ENCODE measurements at regions of chr5 and their contacts with region 1.

Region 1: GRCh38 chr5:74640450-74640953 is at the start of gene ENC1:
- DNase-seq: peak; percentile 89 to 96 (median 90)
- ATAC-seq: peak; percentile 76 to 94 (median 86)
- H3K4me3 ChIP-seq: peak within 1 kb of the TSS; percentile 69 to 91 (median 80)
- H3K27ac ChIP-seq: peak within 1 kb of the TSS; percentile 81 to 96 (median 92)
- H3K4me1 ChIP-seq: peaks cover 0 to 62% (median 31%) of the 10 kb centered on the region in 12 donors
- H3K27me3 ChIP-seq: no peaks in the 10 kb centered on the region
- CTCF ChIP-seq: peak; percentile 39 to 66 (median 54)
- POLR2A ChIP-seq: peak in 1 of 2 donors; percentile 71
- total RNA-seq, gene ENC1: 3.1 to 11.0 (median 5.5) TPM

Region 2: DNA sequence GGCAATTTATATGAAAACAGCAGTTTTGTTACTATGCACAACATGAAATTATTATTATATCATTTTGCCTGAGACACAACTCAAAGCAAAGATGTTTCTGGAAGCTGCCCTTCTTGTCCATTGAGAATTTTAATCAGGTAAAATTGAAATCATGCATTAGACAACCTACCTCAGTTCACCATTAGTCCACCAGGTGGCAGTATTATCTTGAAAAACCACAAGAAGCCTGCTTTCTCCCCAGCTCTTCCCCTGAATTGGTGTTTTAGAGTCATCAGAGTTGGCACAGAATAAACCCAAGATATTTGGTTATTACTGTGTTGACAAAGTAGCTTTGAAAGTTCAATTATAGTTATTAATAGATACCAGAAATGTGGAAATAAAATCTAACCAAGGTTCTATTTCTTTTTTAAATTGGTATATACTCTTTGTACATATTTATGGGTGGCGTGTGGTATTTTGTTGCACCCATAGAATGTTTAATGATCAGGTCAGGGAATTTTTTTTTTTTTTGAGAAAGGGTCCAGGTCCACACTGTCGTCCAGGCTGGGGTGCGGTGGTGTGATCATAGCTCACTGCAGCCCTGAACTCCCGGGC is 1049.3 kb before region 1 on chr5:
- intact Hi-C with region 1: loop called in 5 of 10 experiments (anchors 5 to 10 kb)
- DNase-seq: peak in 2 of 5 donors; percentile 41 to 54
- ATAC-seq: peak in 3 of 4 donors; percentile 59 to 75 (median 66)
- H3K4me3 ChIP-seq: no peak overlapping the region
- H3K27ac ChIP-seq: no peak overlapping the region
- H3K4me1 ChIP-seq: no peaks in the 10 kb centered on the region
- H3K27me3 ChIP-seq: no peaks in the 10 kb centered on the region
- CTCF ChIP-seq: peak; percentile 80 to 93 (median 87)
- POLR2A ChIP-seq: no peak

Region 3: GRCh38 chr5:74035521-74035981 is 605.0 kb before region 1 on chr5:
- intact Hi-C with region 1: loop called in 9 of 10 experiments (anchors 2 to 5 kb)
- DNase-seq: peak in 3 of 5 donors; percentile 32 to 50 (median 38)
- ATAC-seq: peak; percentile 46 to 84 (median 69)
- H3K4me3 ChIP-seq: no peak overlapping the region
- H3K27ac ChIP-seq: no peak overlapping the region
- H3K4me1 ChIP-seq: peaks cover 0 to 14% (median 1%) of the 10 kb centered on the region in 12 donors
- H3K27me3 ChIP-seq: no peaks in the 10 kb centered on the region
- CTCF ChIP-seq: peak; percentile 16 to 69 (median 52)
- POLR2A ChIP-seq: no peak

Region 4: DNA sequence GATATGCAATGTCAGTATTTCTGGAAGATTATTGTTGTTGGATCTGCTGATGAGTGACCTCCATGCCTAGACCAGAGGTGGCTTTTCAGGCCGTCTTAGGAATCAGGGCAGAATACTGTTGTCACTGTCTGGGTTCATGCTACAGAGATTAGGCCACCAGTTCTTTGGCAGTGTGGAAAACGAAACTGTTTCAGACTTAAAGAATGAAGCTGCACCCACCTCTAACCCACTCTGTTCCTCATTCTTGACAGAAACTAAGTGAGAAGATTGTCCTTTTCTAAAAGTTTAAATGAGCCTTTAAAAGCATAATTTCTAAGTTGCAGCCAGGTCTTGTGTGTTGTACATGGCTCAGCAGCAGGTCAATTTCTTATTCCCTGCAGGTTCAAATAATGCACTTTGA is 444.3 kb before region 1 on chr5:
- intact Hi-C with region 1: loop called in 5 of 10 experiments (anchors 5 to 10 kb)
- DNase-seq: no peak
- ATAC-seq: no peak
- H3K4me3 ChIP-seq: no peak overlapping the region
- H3K27ac ChIP-seq: no peak overlapping the region
- H3K4me1 ChIP-seq: peaks cover 0 to 28% (median 7%) of the 10 kb centered on the region in 12 donors
- H3K27me3 ChIP-seq: no peaks in the 10 kb centered on the region
- CTCF ChIP-seq: no peak
- POLR2A ChIP-seq: no peak

Region 5: DNA sequence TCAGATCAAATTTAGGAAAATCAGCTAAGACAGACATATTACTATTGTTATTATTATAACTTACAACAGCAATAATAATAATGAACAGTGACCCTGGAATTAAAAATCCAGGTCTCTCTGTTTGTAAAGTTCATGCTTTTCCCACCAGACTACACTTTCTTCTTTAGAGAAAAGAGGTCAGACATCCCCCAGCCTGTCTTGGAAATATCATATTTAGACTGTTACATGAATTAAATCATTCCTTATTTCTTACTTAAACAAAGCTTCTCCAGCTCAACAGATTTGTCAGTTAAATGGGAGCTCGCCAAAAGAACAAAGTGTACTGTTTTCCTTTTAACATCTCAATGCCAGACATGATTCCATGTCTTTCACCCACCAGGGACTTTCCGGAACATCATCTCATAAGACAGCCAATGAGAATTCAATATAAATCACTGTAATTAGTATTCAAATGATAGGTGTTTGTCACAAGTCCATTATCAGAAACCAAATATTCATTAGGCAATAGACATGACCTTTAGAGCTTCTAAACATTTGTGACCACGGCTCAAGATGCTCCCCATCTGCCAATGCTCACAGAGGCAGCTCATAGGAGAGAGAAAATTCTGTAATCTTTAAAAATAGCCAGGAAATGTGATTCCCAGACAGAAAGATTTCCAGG is 351.9 kb before region 1 on chr5:
- intact Hi-C with region 1: loop called in 4 of 10 experiments (anchors 5 to 10 kb)
- DNase-seq: peak in 1 of 5 donors; percentile 42
- ATAC-seq: peak; percentile 25 to 88 (median 64)
- H3K4me3 ChIP-seq: no peak overlapping the region
- H3K27ac ChIP-seq: peak overlapping the region; percentile 38 to 82 (median 58)
- H3K4me1 ChIP-seq: peaks cover 0 to 29% (median 4%) of the 10 kb centered on the region in 12 donors
- H3K27me3 ChIP-seq: no peaks in the 10 kb centered on the region
- CTCF ChIP-seq: no peak
- POLR2A ChIP-seq: no peak

Region 6: GRCh38 chr5:74357827-74358226 is 282.7 kb before region 1 on chr5:
- intact Hi-C with region 1: no loop called
- DNase-seq: no peak
- ATAC-seq: no peak
- H3K4me3 ChIP-seq: no peak overlapping the region
- H3K27ac ChIP-seq: no peak overlapping the region
- H3K4me1 ChIP-seq: peaks cover 0 to 18% (median 0%) of the 10 kb centered on the region in 12 donors
- H3K27me3 ChIP-seq: no peaks in the 10 kb centered on the region
- CTCF ChIP-seq: no peak
- POLR2A ChIP-seq: no peak

Region 7: DNA sequence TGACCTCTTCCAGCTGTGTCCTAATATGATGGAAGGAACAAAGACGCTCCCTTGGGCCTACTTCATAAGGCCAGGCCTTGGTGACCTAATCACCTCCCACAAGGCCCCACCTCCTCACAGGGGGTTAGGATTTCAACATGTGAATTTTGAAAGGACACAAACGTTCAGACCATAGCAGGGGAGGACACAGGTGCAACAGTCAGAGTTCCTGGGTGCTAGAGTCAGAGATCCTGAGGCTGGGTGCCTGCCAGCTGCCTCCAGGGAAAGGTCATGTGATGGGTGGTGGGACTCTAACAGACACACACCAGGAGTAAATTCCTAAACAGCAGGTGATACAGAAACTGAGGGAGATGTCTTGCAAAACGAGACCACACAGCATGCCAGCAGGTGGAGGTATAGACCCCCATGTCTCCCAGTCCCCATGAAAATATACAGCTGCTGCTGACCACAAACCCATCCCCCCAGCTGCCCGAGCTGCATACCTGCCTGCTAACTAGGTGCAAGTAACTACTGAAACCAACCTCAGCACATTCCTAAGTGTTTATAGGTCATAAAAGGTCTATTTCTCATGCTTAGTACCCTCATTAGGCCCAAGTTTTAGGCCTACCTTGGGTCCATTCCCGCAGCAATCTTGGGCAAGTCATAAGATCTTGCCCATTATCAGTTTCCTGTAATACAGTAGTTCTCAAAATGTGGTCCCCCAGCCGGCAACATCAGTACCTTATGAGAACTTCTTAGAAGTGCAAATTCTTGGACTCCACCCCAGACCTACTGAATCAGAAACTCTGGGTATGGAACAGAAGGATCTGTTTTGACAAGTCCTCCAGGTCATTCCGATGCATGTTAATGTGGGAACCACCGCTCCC is 245.4 kb before region 1 on chr5:
- intact Hi-C with region 1: loop called in 2 of 10 experiments (anchors 5 to 10 kb)
- DNase-seq: no peak
- ATAC-seq: peak in 3 of 4 donors; percentile 52 to 84 (median 82)
- H3K4me3 ChIP-seq: no peak overlapping the region
- H3K27ac ChIP-seq: no peak overlapping the region
- H3K4me1 ChIP-seq: peaks cover 0 to 10% (median 4%) of the 10 kb centered on the region in 12 donors
- H3K27me3 ChIP-seq: no peaks in the 10 kb centered on the region
- CTCF ChIP-seq: no peak
- POLR2A ChIP-seq: no peak

Region 8: GRCh38 chr5:74543156-74543995 is 97.1 kb before region 1 on chr5:
- intact Hi-C with region 1: loop called in 4 of 10 experiments (anchors 2 to 10 kb)
- DNase-seq: no peak
- ATAC-seq: no peak
- H3K4me3 ChIP-seq: peak overlapping the region in 1 of 12 donors; percentile 15
- H3K27ac ChIP-seq: no peak overlapping the region
- H3K4me1 ChIP-seq: peaks cover 0 to 26% (median 6%) of the 10 kb centered on the region in 12 donors
- H3K27me3 ChIP-seq: peaks cover 0 to 6% (median 0%) of the 10 kb centered on the region in 9 donors
- CTCF ChIP-seq: no peak
- POLR2A ChIP-seq: no peak

Region 9: GRCh38 chr5:74684900-74685851 is 44.7 kb after region 1 on chr5 and contains the start of gene HEXB:
- intact Hi-C with region 1: no loop called
- DNase-seq: peak; percentile 92 to 96 (median 93)
- ATAC-seq: peak; percentile 97 to 99 (median 98)
- H3K4me3 ChIP-seq: peak within 1 kb of the TSS; percentile 79 to 99 (median 93)
- H3K27ac ChIP-seq: peak within 1 kb of the TSS; percentile 55 to 96 (median 90)
- H3K4me1 ChIP-seq: peaks cover 0 to 29% (median 18%) of the 10 kb centered on the region in 12 donors
- H3K27me3 ChIP-seq: no peaks in the 10 kb centered on the region
- CTCF ChIP-seq: no peak
- POLR2A ChIP-seq: peak in 1 of 2 donors; percentile 94
- total RNA-seq, gene HEXB: 71.3 to 278 (median 116) TPM

Region 10: GRCh38 chr5:74865804-74866595 is 225.5 kb after region 1 on chr5 and contains the start of gene FAM169A:
- intact Hi-C with region 1: no loop called
- DNase-seq: peak in 4 of 5 donors; percentile 9 to 61 (median 30)
- ATAC-seq: peak in 3 of 4 donors; percentile 77 to 83 (median 83)
- H3K4me3 ChIP-seq: peak within 1 kb of the TSS; percentile 46 to 74 (median 58)
- H3K27ac ChIP-seq: peak within 1 kb of the TSS in 3 of 12 donors; percentile 29 to 63 (median 31)
- H3K4me1 ChIP-seq: peaks cover 0 to 16% (median 5%) of the 10 kb centered on the region in 12 donors
- H3K27me3 ChIP-seq: peaks cover 0 to 46% (median 23%) of the 10 kb centered on the region in 9 donors
- CTCF ChIP-seq: no peak
- POLR2A ChIP-seq: no peak
- total RNA-seq, gene FAM169A: 2.6 to 10.1 (median 5.1) TPM

Measured in heart left ventricle (tissue), 16 donors.